ENCODE measurements at regions of chr17 and their contacts with region 1.

Region 1: GRCh38 chr17:75779231-75779986 is 5.2 kb upstream of the UNK start:
- DNase-seq: peak; percentile 94 to 98 (median 98)
- H3K4me3 ChIP-seq: peak overlapping the region; percentile 18 to 84
- H3K4me3 Mint-ChIP-seq: peak overlapping the region; percentile 94 to 99 (median 98)
- H3K27ac ChIP-seq: peak overlapping the region; percentile 98
- H3K27ac Mint-ChIP-seq: peak overlapping the region; percentile 96 to 100 (median 99)
- H3K4me1 ChIP-seq: peaks cover 45% of the 10 kb centered on the region
- H3K4me1 Mint-ChIP-seq: peaks cover 32 to 70% (median 47%) of the 10 kb centered on the region in 4 donors
- H3K27me3 ChIP-seq: no peaks in the 10 kb centered on the region
- H3K27me3 Mint-ChIP-seq: peaks cover 1 to 2% of the 10 kb centered on the region in 2 donors

Region 2: DNA sequence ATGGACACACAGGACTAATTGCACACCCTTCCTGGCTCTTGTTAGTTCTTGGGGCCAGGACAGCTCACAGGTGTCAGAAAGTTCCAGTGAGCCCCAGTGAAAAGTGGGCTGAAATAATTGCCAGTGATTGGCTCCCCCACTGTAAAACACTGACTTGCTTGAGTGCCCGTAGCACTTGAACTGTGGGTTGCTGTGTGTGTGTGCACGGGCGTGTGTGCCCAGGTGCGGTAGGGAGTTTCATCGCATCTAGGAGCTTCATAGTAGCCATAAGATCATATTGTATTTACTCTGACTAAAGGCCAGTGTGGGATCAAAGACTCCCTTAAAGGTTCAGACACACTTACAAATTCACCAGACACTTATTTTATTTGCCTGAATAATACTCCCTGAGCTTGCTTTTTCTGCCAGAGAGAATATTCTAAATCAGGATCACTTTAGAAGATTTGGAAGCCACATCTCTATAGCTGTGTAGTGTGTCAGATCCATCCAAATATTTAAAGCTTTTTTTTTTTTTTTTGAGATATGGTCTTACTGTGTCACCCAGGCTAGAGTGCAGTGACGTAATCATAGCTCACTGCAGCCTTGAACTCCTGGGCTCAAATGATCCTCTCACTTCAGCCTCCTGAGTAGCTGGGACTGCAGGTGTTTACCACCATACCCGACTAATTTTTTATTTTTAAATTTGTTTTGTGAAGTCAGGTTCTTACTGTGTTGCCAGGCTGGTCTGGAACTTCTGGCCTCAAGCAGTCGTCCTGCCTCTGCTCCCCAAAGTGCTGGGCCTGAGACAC is 16.6 kb after region 1 on chr17:
- CTCF ChIA-PET with region 1: interaction called, 8 read pairs
- POLR2A ChIA-PET with region 1: interaction called, 16 read pairs
- intact Hi-C with region 1: no loop called
- DNase-seq: no peak
- H3K4me3 ChIP-seq: no peak overlapping the region
- H3K4me3 Mint-ChIP-seq: no peak overlapping the region
- H3K27ac ChIP-seq: no peak overlapping the region
- H3K27ac Mint-ChIP-seq: peak overlapping the region in 2 of 7 donors; percentile 10 to 80
- H3K4me1 ChIP-seq: peaks cover 10% of the 10 kb centered on the region
- H3K4me1 Mint-ChIP-seq: peaks cover 9 to 22% (median 19%) of the 10 kb centered on the region in 4 donors
- H3K27me3 ChIP-seq: no peaks in the 10 kb centered on the region
- H3K27me3 Mint-ChIP-seq: no peaks in the 10 kb centered on the region

Region 3: DNA sequence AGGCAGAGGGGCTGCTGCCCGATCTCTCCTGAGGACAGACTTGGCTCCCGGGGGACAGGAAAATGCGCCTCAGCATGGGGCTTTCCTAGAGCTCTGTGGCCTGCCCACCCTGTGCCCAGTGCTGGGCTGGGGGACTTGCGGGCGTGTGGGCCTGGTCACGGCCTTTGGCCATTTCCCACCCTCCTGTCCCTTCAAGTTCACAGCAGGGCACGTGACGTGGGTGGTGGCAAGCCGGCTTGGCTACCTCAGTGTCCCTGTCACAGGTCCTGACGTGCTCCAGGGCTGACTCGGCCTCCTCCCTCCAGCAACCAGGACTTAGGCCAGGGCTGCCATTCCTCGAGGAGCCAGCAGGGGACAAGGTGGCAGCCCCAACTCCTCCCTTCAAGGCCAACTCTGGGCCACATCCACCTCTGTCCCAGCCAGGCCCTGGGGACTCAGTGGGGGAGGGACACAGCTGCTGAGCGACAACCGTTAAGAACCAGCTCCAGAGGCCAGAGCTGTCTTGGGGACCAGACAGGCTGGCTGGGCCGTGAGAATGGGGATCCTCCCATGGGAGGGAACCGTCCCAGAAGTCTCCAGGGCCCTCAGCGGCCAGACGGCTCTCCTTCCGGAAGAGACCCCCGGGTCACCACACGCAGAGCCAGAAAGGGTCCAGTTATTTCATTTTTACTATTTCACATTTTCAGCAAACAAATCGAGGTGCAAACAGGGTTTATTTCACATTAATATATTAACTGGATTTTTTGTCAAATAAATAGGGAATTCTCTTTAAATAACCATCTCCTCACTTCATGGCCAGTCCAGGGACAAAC is 65.8 kb after region 1 on chr17:
- CTCF ChIA-PET with region 1: interaction called, 8 read pairs
- POLR2A ChIA-PET with region 1: interaction called, 556 read pairs
- intact Hi-C with region 1: no loop called
- DNase-seq: peak; percentile 44 to 73 (median 49)
- H3K4me3 ChIP-seq: no peak overlapping the region
- H3K4me3 Mint-ChIP-seq: peak overlapping the region; percentile 25 to 50 (median 41)
- H3K27ac ChIP-seq: peak overlapping the region; percentile 90
- H3K27ac Mint-ChIP-seq: peak overlapping the region; percentile 47 to 90 (median 77)
- H3K4me1 ChIP-seq: peaks cover 49% of the 10 kb centered on the region
- H3K4me1 Mint-ChIP-seq: peaks cover 5 to 39% (median 22%) of the 10 kb centered on the region in 4 donors
- H3K27me3 ChIP-seq: no peaks in the 10 kb centered on the region
- H3K27me3 Mint-ChIP-seq: no peaks in the 10 kb centered on the region

Region 4: GRCh38 chr17:75872434-75873351 is 93.3 kb after region 1 on chr17:
- CTCF ChIA-PET with region 1: interaction called, 10 read pairs
- POLR2A ChIA-PET with region 1: interaction called, 90 read pairs
- intact Hi-C with region 1: no loop called
- DNase-seq: peak; percentile 71 to 82 (median 79)
- H3K4me3 ChIP-seq: peak overlapping the region in 1 of 2 donors; percentile 16
- H3K4me3 Mint-ChIP-seq: peak overlapping the region in 7 of 8 donors; percentile 48 to 78 (median 73)
- H3K27ac ChIP-seq: peak overlapping the region; percentile 60
- H3K27ac Mint-ChIP-seq: peak overlapping the region; percentile 90 to 99 (median 97)
- H3K4me1 ChIP-seq: peaks cover 50% of the 10 kb centered on the region
- H3K4me1 Mint-ChIP-seq: peaks cover 27 to 54% (median 40%) of the 10 kb centered on the region in 4 donors
- H3K27me3 ChIP-seq: no peaks in the 10 kb centered on the region
- H3K27me3 Mint-ChIP-seq: no peaks in the 10 kb centered on the region

Region 5: GRCh38 chr17:75877752-75878173 is 98.4 kb after region 1 on chr17:
- CTCF ChIA-PET with region 1: interaction called, 10 read pairs
- POLR2A ChIA-PET with region 1: interaction called, 90 read pairs
- intact Hi-C with region 1: no loop called
- DNase-seq: peak; percentile 71 to 76 (median 75)
- H3K4me3 ChIP-seq: peak overlapping the region; percentile 61 to 76
- H3K4me3 Mint-ChIP-seq: peak overlapping the region; percentile 89 to 95 (median 91)
- H3K27ac ChIP-seq: peak overlapping the region; percentile 56
- H3K27ac Mint-ChIP-seq: peak overlapping the region; percentile 88 to 97 (median 94)
- H3K4me1 ChIP-seq: peaks cover 64% of the 10 kb centered on the region
- H3K4me1 Mint-ChIP-seq: peaks cover 26 to 62% (median 45%) of the 10 kb centered on the region in 4 donors
- H3K27me3 ChIP-seq: no peaks in the 10 kb centered on the region
- H3K27me3 Mint-ChIP-seq: no peaks in the 10 kb centered on the region

Measured in CD4-positive, alpha-beta memory T cell (primary cell).